Left colon (tissue), 2 donors: ENCODE measurements at regions of chr7 and their contacts with region 1.

Region 1: DNA sequence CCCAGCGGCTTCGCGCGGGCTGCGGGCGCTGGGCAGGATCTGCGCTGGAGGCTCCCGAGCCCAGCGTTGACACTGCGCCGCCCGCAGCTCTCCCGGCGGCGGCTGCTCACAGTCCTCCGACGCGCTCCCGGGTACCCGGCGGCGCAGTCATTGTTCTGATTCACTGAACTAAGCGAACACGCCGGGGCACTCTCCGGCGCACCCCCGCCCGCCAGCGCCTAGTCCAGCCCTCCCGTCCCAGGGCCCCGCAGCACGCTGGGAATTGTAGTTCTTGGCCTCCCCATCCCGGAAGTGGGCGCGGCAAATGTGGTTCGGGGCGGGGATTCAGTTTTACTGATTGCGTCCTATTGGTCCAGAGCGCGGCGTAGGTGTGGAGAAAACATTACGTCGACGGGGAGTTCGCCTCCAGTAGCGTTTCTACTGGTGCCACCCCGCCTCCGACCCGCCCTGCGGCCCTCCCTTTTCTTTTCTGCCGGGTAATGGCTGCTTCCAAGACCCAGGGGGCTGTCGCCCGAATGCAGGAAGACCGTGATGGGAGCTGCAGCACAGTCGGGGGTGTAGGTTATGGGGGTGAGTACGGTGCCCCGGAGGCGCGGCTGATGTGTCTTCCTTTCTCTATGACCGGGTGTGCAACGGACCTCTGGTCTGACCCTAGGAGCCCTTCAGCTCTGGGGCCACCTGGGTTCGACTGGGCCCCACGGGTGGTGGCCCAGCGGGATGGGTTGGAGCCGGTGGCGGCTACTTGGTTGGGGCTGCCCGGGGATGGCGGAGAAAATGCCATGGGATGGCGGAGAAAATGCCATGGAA is at the starts of genes DOCK4 and ZNF277:
- DNase-seq: peak; percentile 99
- ATAC-seq: peak; percentile 93
- total RNA-seq, gene DOCK4: 6.6 to 11.5 TPM
- total RNA-seq, gene ZNF277: 20.1 to 22.3 TPM

Region 2: GRCh38 chr7:112398534-112398933 is 192.1 kb after region 1 on chr7:
- intact Hi-C with region 1: loop called in 1 of 2 experiments (anchors 10 kb)
- DNase-seq: no peak
- ATAC-seq: no peak

Region 3: GRCh38 chr7:112939574-112940314 is 733.3 kb after region 1 on chr7:
- intact Hi-C with region 1: loop called in 1 of 2 experiments (anchors 10 kb)
- DNase-seq: peak; percentile 99 to 100
- ATAC-seq: peak; percentile 99